ENCODE measurements at regions of chr18 and their contacts with region 1.

Region 1: GRCh38 chr18:13268158-13269012 is 49.8 kb downstream of the LDLRAD4 start:
- DNase-seq: no peak
- H3K4me3 Mint-ChIP-seq: peak overlapping the region; percentile 76
- H3K27ac Mint-ChIP-seq: peak overlapping the region; percentile 90
- H3K4me1 Mint-ChIP-seq: peaks cover 64% of the 10 kb centered on the region
- H3K27me3 Mint-ChIP-seq: no peaks in the 10 kb centered on the region

Region 2: DNA sequence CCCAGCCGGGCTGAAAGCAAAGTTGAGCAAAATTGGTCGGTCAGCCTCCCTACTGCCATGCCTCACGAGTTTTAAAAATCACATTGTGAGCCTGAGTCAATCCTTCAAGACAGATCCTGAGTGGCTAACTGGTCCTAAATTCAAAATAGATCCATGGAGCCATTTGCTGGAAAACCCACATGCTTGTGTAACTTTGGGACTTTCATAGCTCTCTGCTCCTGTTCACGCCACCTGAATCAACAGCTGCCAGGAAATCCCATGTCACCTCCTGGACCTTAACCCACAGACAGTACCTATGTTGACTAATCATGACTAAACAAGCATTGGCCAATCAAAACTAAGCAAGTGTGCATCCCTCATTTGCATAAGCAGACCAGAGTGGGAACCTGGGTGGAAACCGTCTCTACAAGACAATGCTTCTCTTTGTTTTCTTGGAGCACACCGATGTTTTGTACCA is 92.6 kb before region 1 on chr18:
- intact Hi-C with region 1: loop called (anchors 5 kb)
- DNase-seq: no peak
- H3K4me3 Mint-ChIP-seq: no peak overlapping the region
- H3K27ac Mint-ChIP-seq: no peak overlapping the region
- H3K4me1 Mint-ChIP-seq: peaks cover 29% of the 10 kb centered on the region
- H3K27me3 Mint-ChIP-seq: peaks cover 11% of the 10 kb centered on the region

Region 3: DNA sequence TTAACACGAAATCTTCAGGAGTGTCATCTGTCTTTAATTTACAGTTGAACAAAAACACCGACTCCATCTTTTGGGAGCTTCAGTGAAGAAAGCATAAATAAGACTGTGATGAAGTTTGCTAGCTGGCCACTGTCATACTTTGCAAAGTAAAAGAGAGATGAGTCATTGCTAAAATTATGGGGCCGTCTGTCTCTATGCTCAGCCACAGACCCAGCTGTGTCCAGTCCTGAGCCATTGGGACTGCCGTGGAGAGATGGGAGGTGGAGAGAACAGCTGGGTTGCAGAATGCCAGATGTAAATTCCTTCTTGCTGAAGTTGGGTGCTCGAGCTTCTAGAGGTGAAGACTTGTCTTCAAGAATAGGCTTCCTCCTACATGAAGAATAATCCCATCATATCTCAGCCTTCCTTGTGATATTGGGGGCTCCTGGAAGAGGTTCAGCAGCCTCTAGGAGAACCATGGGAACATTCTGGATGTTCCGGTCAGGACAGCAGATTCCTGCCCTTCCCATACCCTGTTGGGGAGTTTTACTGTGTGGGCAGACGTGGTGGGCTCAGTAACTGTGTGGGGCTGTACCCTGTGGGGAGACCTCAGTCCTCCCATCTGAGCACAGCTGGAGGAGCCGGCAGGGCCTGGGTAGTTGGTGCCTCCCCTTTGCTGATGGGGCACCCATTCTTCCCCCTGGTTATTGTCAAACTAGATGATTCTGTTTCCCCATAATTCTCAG is 21.3 kb after region 1 on chr18:
- intact Hi-C with region 1: loop called (anchors 1 kb)
- DNase-seq: no peak
- H3K4me3 Mint-ChIP-seq: no peak overlapping the region
- H3K27ac Mint-ChIP-seq: peak overlapping the region; percentile 83
- H3K4me1 Mint-ChIP-seq: peaks cover 39% of the 10 kb centered on the region
- H3K27me3 Mint-ChIP-seq: no peaks in the 10 kb centered on the region

Region 4: DNA sequence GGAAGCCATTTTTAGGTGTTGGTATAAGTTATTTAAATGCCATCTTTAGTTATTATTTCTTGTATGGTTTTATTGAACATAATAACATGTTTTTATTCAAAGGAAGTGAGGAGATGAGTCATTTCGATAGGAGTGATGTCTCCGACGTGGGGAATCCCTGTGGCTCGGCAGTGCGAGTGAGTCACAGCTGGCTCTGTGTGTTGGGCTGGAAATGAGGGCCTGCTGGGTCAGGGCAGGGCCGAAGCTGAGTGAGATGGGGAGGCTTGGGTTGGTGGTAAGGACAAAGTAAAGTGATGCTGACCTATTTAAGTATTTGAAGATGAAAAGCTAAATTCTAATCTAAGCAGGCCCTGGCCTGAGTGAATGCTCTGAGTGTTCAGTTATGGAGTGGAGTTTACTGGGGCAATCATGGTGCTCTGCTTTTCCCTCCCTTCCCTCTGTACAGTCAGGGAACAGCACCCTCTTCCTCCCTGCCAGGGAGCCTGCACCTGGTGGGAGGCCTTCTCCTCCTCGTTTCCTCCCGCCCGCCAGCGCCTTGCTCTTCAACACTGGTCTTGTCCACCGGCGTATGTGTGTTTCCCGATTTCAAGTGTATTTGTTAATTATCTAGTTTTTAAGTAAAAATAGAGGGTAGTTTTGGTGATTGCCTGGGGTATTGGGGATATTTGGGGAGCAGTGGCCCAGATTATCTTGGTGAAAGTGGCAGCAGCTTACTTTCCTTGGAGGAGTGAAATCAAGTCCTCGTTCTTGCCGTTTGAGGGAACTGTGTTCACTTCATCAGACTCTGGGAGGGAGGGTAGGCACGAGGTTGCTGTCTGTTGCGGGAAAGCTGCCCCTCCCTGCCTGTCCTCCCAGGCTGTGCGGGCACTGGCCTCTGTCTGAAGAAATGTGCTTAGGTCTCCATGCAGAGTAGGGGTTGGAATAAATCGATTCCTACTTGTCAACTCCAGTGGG is 107.2 kb after region 1 on chr18:
- intact Hi-C with region 1: loop called (anchors 1 kb)
- DNase-seq: peak; percentile 94
- H3K4me3 Mint-ChIP-seq: peak overlapping the region; percentile 74
- H3K27ac Mint-ChIP-seq: peak overlapping the region; percentile 93
- H3K4me1 Mint-ChIP-seq: peaks cover 69% of the 10 kb centered on the region
- H3K27me3 Mint-ChIP-seq: no peaks in the 10 kb centered on the region

Region 5: DNA sequence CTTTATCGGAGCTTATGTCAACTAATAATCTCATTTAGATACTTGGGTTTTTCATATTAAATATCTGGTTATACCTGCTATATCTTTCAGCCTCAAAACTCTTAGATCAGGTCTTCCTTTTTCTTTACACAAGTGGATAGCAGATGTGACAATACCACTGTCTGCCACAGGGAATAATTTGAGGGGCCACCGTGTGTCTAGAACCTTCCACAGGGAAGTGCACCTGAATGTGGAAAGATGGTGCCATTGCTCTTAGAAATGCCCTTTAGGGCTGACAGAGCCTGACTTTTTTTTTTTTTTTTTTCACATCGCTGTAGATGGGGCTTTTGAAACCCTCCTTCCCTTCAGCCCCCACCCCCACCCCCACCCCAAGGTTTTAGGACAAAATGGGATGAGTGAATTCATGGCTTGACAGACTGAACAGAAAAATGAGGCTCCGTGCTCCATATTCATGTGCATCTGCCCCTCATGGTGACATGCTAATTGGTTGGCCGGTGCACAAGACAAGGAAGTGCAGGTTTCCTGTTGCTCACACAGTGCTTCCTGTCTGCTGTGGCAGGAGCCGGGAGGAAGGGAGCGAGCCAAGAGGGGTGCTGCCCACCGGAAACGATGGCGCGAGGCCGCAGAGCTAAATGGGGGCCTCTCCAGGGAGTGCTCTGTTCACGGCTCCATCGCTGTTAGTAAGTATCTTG is 196.2 kb after region 1 on chr18:
- intact Hi-C with region 1: loop called (anchors 5 kb)
- DNase-seq: peak; percentile 91
- H3K4me3 Mint-ChIP-seq: peak overlapping the region; percentile 90
- H3K27ac Mint-ChIP-seq: peak overlapping the region; percentile 92
- H3K4me1 Mint-ChIP-seq: peaks cover 53% of the 10 kb centered on the region
- H3K27me3 Mint-ChIP-seq: no peaks in the 10 kb centered on the region

Region 6: DNA sequence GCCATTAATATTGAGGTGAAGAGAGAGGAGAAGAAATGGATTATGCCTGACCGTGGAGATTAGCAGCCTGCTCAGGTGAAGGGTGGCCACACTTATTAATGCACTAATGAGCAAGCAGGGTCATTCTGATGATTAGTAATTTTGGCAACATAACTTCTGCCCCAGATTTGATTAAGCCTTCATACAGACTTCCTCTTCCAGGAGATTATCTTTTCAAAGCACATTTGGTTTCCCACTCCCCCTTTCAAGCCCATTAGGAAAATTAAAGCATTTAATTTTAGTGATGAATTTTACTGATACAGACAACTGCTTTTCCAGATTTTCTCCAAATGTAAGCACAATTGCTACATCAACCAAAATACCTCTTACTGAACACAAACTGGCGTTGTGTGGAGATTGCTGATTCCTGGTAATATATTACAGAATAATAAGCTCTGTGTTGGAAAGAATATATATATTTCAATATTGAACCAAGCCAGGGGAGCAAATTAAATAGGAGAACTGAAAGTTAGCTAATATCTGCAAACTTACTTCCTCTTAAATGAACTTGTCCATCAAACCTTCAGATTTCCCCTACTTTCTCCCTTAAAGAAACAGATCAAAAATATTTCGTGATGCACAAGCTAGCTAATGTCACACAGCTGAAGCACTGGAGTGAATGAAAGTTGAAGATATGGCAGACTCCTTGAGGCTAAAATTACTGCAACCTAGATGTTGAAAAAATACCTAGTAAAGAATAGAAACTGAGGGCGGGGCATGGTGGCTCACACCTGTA is 317.2 kb after region 1 on chr18:
- intact Hi-C with region 1: loop called (anchors 5 kb)
- DNase-seq: no peak
- H3K4me3 Mint-ChIP-seq: no peak overlapping the region
- H3K27ac Mint-ChIP-seq: no peak overlapping the region
- H3K4me1 Mint-ChIP-seq: peaks cover 59% of the 10 kb centered on the region
- H3K27me3 Mint-ChIP-seq: no peaks in the 10 kb centered on the region

Measured in activated CD4-positive, alpha-beta T cell treated with anti-CD3 and anti-CD28 coated beads, Interleukin-2, amount 10 ng/mL, durations not matched to agents 24 days and 14 days (primary cell).